Right lobe of liver (tissue), 6 donors: ENCODE measurements at regions of chr19 and their contacts with region 1.

Region 1: DNA sequence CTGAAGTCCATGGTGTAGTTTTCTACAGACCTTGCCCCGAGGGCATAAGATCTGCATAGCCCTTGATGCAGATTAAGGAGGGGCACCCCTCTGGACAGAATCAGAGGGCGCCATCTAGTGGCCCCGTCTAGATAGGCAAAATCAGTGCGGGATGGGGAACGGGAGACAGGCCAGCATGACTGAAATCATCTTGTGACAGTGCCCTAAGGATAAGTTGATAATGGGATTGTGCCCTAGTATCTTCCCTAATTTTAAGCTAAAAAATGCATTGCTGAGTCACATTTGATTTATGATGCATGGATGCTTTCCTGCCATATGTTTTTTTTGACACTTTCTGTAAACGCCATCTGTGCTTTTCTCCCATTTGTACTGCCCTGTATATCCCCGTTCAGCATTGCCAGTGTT is 19.0 kb upstream of the GPI start:
- DNase-seq: peak in 2 of 3 donors; percentile 76 to 81
- ATAC-seq: peak; percentile 93 to 95 (median 94)
- H3K4me3 ChIP-seq: no peak overlapping the region
- H3K27ac ChIP-seq: no peak overlapping the region
- H3K4me1 ChIP-seq: peaks cover 0 to 2% (median 0%) of the 10 kb centered on the region in 4 donors
- H3K27me3 ChIP-seq: no peaks in the 10 kb centered on the region
- CTCF ChIP-seq: peak; percentile 77 to 94 (median 91)
- POLR2A ChIP-seq: no peak

Region 2: DNA sequence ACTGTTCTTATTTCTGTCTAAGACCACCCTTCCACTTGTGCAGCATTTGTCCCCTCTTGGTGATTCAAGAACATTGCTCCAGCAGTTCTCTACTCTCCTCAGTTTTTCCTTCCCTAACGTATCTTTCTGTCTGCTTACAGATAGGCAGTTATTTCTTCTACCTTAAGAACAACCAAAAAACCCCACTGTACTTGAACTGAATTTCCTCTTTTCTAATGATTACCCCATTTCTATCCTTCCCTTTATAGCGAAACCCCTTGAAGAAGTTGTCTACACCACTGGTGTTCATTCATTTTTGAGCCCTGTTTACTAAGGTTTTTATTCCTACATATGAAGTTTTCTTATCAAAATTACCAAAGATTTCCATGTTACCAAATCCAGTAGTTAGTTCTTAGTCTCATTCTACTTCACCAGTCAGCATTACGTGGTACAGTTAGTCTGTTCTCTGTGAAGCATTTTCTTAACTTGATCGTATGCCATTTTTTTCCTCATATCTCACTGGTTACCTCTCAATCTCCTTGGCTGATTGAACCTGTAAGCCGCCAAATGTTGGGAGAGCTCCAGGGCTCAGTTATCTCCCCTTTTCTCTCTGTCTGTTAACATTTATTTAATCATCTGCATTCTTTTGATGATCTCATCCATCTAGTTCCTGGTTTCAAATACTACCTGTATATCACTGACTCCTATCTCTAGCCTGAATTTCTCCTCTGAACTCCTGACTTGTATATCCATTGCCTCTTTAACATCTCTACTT is 164.7 kb before region 1 on chr19:
- intact Hi-C with region 1: no loop called
- DNase-seq: no peak
- ATAC-seq: peak in 2 of 4 donors; percentile 11 to 82
- H3K4me3 ChIP-seq: no peak overlapping the region
- H3K27ac ChIP-seq: no peak overlapping the region
- H3K4me1 ChIP-seq: peaks cover 0 to 70% (median 14%) of the 10 kb centered on the region in 4 donors
- H3K27me3 ChIP-seq: no peaks in the 10 kb centered on the region
- CTCF ChIP-seq: no peak
- POLR2A ChIP-seq: no peak

Region 3: GRCh38 chr19:34241513-34242337 is 104.2 kb before region 1 on chr19:
- intact Hi-C with region 1: loop called in 1 of 2 experiments (anchors 10 kb)
- DNase-seq: no peak
- ATAC-seq: no peak
- H3K4me3 ChIP-seq: no peak overlapping the region
- H3K27ac ChIP-seq: no peak overlapping the region
- H3K4me1 ChIP-seq: no peaks in the 10 kb centered on the region
- H3K27me3 ChIP-seq: no peaks in the 10 kb centered on the region
- CTCF ChIP-seq: no peak
- POLR2A ChIP-seq: no peak

Region 4: GRCh38 chr19:34298891-34299520 is 46.9 kb before region 1 on chr19:
- intact Hi-C with region 1: loop called in 1 of 2 experiments (anchors 10 kb)
- DNase-seq: no peak
- ATAC-seq: peak; percentile 36 to 79 (median 64)
- H3K4me3 ChIP-seq: no peak overlapping the region
- H3K27ac ChIP-seq: peak overlapping the region in 1 of 3 donors; percentile 50
- H3K4me1 ChIP-seq: peaks cover 0 to 16% (median 0%) of the 10 kb centered on the region in 4 donors
- H3K27me3 ChIP-seq: no peaks in the 10 kb centered on the region
- CTCF ChIP-seq: no peak
- POLR2A ChIP-seq: no peak

Region 5: DNA sequence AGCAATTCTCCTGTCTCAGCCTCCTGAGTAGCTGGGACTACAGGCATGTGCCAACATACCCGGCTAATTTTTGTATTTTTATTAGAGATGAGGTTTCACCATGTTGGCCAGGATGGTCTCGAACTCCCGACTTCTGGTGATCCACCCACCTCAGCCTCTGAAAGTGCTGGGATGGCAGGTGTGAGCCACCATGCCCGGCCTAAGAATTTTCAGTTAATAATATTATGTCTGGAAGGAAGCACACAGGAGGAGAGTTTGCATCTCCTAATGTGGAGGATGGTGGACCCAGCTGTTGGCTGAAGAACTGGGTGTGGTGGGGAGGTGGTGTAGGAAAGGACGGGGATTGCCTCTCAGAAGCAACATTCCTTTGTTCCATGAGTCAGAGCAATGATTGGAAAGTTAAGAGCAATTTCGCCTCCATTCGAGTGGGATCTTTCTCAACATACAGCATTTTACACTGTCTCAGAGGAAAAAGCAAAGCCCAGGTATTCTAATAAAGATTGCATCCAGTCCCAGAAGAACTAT is 70.1 kb after region 1 on chr19:
- intact Hi-C with region 1: no loop called
- DNase-seq: no peak
- ATAC-seq: no peak
- H3K4me3 ChIP-seq: no peak overlapping the region
- H3K27ac ChIP-seq: no peak overlapping the region
- H3K4me1 ChIP-seq: no peaks in the 10 kb centered on the region
- H3K27me3 ChIP-seq: no peaks in the 10 kb centered on the region
- CTCF ChIP-seq: no peak
- POLR2A ChIP-seq: no peak